Aorta (tissue), 5 donors: ENCODE measurements at regions of chr4 and their contacts with region 1.

Region 1: GRCh38 chr4:106369456-106370060 is 980 bp upstream of the GIMD1 start:
- DNase-seq: no peak
- ATAC-seq: no peak
- H3K4me3 ChIP-seq: no peak overlapping the region
- H3K27ac ChIP-seq: no peak overlapping the region
- H3K4me1 ChIP-seq: peaks cover 0 to 10% of the 10 kb centered on the region in 2 donors
- H3K27me3 ChIP-seq: no peaks in the 10 kb centered on the region

Region 2: DNA sequence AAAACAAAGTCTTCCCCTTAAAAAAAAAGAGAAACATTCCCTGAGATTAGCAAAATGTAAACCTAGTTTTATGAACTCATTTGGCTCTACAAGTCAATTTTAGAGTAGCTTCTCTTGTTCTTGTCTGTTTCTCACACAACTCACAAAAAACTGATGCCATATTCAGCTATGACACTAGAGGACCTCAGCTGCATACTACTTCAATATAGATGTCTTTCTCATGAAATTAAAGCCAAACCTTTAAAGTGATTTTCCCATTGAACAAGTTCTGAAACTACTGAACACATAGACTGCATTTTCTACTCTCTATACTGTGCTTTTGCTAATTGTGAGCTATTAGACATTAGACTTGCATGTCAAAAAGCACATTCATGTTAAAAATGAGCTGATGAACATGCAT is 103.4 kb before region 1 on chr4:
- intact Hi-C with region 1: loop called in 1 of 2 experiments (anchors 5 kb)
- DNase-seq: no peak
- ATAC-seq: no peak
- H3K4me3 ChIP-seq: no peak overlapping the region
- H3K27ac ChIP-seq: no peak overlapping the region
- H3K4me1 ChIP-seq: peaks cover 0 to 2% of the 10 kb centered on the region in 2 donors
- H3K27me3 ChIP-seq: no peaks in the 10 kb centered on the region

Region 3: GRCh38 chr4:106315968-106316772 is 53.4 kb before region 1 on chr4 and contains the starts of genes AIMP1 and TBCK:
- intact Hi-C with region 1: loop called (anchors 5 kb)
- DNase-seq: peak; percentile 94 to 95
- ATAC-seq: peak; percentile 98
- H3K4me3 ChIP-seq: peak within 1 kb of the TSS; percentile 60 to 98
- H3K27ac ChIP-seq: peak within 1 kb of the TSS; percentile 92 to 98
- H3K4me1 ChIP-seq: peaks cover 0 to 3% of the 10 kb centered on the region in 2 donors
- H3K27me3 ChIP-seq: no peaks in the 10 kb centered on the region
- total RNA-seq, gene AIMP1: 39.3 to 45.6 TPM
- total RNA-seq, gene TBCK: 46.8 to 64.1 TPM

Region 4: GRCh38 chr4:106353786-106354185 is 15.8 kb before region 1 on chr4:
- intact Hi-C with region 1: no loop called
- DNase-seq: no peak
- ATAC-seq: no peak
- H3K4me3 ChIP-seq: no peak overlapping the region
- H3K27ac ChIP-seq: no peak overlapping the region
- H3K4me1 ChIP-seq: no peaks in the 10 kb centered on the region
- H3K27me3 ChIP-seq: no peaks in the 10 kb centered on the region

Region 5: DNA sequence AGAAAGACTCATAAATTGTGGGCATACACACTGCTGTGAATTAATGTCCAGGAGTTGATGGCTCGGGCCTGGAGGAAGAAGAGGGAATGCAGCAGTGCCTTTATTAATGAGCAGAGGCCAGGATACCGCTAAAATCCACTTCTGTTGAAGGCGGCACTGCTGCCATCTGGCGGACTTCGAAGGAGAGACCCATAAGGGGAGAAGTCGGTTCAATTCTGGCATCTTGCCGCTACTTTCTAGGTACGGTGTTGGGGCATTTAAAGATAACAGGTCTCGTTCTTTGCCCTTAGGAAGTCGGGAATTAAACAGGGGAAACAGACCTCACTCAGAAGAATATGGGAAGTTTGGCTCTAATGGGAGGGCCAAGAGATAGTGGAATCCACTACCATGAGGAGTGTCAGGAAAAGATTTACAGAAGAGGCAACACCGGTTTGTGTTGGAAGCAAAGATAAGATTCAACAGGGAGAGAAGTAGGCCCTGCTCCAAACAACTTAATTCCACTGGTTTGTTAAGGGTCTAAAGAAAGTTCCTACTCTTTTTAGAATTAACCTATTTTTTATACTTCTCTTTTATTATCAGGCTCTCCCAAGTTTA is 132.6 kb after region 1 on chr4:
- intact Hi-C with region 1: loop called (anchors 2 to 5 kb)
- DNase-seq: peak; percentile 54 to 77
- ATAC-seq: peak; percentile 54
- H3K4me3 ChIP-seq: no peak overlapping the region
- H3K27ac ChIP-seq: no peak overlapping the region
- H3K4me1 ChIP-seq: no peaks in the 10 kb centered on the region
- H3K27me3 ChIP-seq: no peaks in the 10 kb centered on the region

Region 6: DNA sequence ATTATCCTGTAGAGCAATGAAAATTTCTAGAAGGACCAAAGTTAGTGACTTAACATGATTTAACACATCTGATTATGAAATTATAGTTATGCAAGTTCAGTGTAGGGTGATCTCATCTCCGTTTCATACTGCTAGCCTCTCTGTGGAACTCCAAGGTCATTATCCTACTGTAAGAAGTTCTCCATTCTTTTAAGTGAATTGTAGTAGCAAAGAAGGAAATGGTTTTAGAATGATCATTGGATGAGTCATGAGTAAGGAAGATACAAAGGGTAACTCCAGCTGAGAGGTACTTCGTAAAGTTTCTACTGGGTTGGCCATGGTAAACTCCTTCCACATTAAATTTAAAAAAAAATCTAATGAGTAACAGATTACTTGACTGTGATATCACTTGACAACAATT is 214.0 kb after region 1 on chr4:
- intact Hi-C with region 1: loop called in 1 of 2 experiments (anchors 5 kb)
- DNase-seq: no peak
- ATAC-seq: no peak
- H3K4me3 ChIP-seq: no peak overlapping the region
- H3K27ac ChIP-seq: peak overlapping the region in 1 of 2 donors; percentile 5
- H3K4me1 ChIP-seq: no peaks in the 10 kb centered on the region
- H3K27me3 ChIP-seq: no peaks in the 10 kb centered on the region

Region 7: DNA sequence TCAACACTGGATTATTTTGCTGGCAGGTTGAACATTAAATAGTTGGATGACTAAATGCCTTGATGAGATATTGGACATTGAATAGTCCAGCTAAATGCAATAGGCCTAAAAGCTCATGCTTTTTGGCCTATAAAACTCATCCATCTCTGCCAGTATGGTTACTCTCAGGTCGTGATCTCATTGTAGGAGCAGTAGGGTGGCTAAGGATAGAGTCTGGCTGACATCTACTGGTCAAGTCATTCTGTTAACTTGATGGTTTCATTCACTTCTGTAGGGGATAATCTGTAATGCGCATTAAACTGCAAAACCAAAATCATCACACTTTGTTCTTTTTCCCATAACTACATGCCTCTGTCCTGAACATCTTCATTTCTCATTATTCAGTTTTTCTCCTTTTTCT is 439.5 kb after region 1 on chr4:
- intact Hi-C with region 1: loop called (anchors 2 to 5 kb)
- DNase-seq: no peak
- ATAC-seq: no peak
- H3K4me3 ChIP-seq: no peak overlapping the region
- H3K27ac ChIP-seq: no peak overlapping the region
- H3K4me1 ChIP-seq: no peaks in the 10 kb centered on the region
- H3K27me3 ChIP-seq: no peaks in the 10 kb centered on the region

Region 8: DNA sequence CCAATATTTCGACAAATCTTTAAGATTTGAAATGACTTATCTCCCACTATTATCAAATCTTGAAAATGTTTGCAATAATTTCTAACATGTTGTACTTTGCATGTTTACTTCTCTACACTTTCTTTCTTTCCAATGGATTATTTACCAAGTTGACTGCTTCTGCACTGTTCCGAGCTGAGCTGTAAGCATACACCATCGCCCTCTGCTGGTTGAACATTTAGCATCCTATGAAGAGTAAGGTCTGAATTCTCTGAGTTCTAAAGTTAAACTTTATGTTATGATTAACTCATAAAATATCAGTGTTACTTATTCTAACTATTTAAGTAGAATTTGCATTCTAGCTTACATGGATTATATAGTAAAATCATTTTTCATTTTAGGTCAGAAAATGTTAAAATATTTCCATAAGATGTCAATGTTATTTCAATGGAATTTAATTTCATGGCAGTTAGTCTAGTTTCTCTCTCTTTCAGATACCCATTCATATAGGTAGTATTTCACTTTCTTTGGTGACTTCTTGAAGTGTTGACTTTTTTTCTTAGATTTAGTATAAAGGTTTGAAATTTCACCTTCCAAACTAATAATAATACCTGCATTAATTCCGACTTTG is 529.2 kb after region 1 on chr4:
- intact Hi-C with region 1: loop called (anchors 5 to 10 kb)
- DNase-seq: no peak
- ATAC-seq: peak; percentile 66
- H3K4me3 ChIP-seq: no peak overlapping the region
- H3K27ac ChIP-seq: no peak overlapping the region
- H3K4me1 ChIP-seq: no peaks in the 10 kb centered on the region
- H3K27me3 ChIP-seq: peaks cover 0 to 2% of the 10 kb centered on the region in 2 donors